H1 (cell line): ENCODE measurements at regions of chr7 and their contacts with region 1.

Region 1: DNA sequence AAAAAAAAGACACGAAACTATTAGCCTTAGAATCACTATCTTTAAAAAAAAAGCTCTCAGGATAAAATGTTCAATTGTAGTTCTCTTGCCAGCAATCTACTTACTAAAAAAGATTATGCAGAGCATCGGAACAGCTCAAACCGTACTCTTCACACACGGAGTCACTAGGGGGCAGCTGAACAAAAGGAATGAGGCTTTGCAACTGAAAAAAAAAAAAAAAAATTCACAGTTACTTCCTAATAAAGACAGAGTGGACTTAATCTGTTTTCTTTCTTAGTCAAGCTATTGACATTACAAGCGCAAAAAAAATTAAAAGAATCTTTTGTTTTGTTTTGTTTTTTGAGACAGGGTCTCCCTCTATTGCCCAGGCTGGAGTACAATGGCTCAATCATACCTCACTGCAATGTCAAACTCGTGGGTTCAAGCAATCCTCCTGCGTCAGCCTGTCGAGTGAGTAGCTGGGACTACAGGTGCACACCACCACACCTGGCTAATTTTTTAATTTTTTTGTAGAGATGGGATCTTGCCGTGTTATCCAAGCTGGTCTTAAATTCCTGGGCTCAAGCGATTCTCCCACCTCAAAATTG is 11.5 kb downstream of the PMS2 start:
- DNase-seq: no peak
- H3K4me3 ChIP-seq: no peak overlapping the region
- H3K27ac ChIP-seq: no peak overlapping the region
- H3K4me1 ChIP-seq: no peaks in the 10 kb centered on the region
- H3K27me3 ChIP-seq: no peaks in the 10 kb centered on the region
- CTCF ChIP-seq: peak; percentile 9 to 42 (median 30); a peak in 3 of 4 replicates
- EP300 ChIP-seq: no peak
- POLR2A ChIP-seq: no peak
- RAD21 ChIP-seq: peak; percentile 60 to 61

Region 2: DNA sequence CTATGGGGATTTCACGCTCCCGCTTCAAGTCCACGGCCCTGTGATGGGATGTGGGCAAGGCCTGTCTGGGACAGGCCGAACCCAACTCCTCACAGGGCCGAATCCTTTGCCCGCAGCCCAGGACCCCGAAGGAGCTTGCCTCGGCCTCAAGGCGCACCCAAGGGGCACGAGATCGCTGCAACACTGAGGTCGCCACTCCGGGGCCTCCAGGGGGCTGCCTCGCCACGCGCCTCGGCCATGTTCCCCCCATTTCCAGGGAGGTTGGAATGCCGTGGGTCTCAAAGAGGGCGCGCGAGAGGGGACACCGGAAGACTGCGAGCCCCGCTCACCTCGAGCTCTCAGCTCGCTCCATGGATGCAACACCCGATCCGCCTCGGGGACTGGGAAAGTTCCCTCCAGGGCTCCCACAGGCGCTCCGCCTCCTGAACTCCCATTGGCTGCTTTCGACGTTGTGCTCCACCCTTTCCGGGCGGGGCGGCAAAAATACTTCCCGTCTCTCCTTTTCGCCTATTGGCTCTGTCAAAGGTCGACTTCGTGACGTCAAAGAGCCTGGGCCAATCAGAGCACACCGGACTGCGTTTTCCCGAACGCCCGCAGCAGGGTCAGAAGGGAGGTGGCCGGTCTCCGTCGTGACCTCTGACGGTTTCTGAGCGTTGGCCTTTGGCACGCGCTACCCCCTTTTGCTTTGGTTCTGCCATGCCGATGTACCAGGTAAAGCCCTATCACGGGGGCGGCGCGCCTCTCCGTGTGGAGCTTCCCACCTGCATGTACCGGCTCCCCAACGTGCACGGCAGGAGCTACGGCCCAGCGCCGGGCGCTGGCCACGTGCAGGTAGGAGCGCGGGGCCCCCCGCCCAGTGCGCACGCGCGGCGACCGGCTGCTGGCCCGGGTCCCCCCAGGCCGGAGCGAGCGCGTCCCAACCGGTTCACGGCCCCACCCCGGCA is 11.6 kb after region 1 on chr7 and contains the starts of genes AIMP2 and PMS2:
- CTCF ChIA-PET with region 1: interaction called, 15 read pairs
- POLR2A ChIA-PET with region 1: interaction called, 12 read pairs
- DNase-seq: peak; percentile 93 to 95
- H3K4me3 ChIP-seq: peak within 1 kb of the TSS; percentile 53 to 86 (median 77)
- H3K27ac ChIP-seq: peak within 1 kb of the TSS; percentile 96
- H3K4me1 ChIP-seq: peaks cover 0 to 3% (median 0%) of the 10 kb centered on the region in 4 experiments; a peak in 1 of 7 replicates
- H3K27me3 ChIP-seq: no peaks in the 10 kb centered on the region
- CTCF ChIP-seq: no peak
- EP300 ChIP-seq: no peak
- POLR2A ChIP-seq: peak; percentile 93 to 99
- RAD21 ChIP-seq: no peak
- total RNA-seq, gene AIMP2: 82.4 and 85.6 TPM in 2 replicates
- total RNA-seq, gene PMS2: 11.1 and 12.1 TPM in 2 replicates

Region 3: GRCh38 chr7:6111041-6111440 is 113.7 kb after region 1 on chr7:
- CTCF ChIA-PET with region 1: no interaction called
- POLR2A ChIA-PET with region 1: no interaction called
- DNase-seq: no peak
- H3K4me3 ChIP-seq: no peak overlapping the region
- H3K27ac ChIP-seq: no peak overlapping the region
- H3K4me1 ChIP-seq: no peaks in the 10 kb centered on the region; a peak in 2 of 7 replicates
- H3K27me3 ChIP-seq: no peaks in the 10 kb centered on the region
- CTCF ChIP-seq: no peak
- EP300 ChIP-seq: no peak
- POLR2A ChIP-seq: no peak
- RAD21 ChIP-seq: no peak